ENCODE measurements at regions of chr7 and their contacts with region 1.

Region 1: GRCh38 chr7:19919261-19920095 is 146.1 kb upstream of the TMEM196 start:
- DNase-seq: no peak
- H3K4me3 ChIP-seq: no peak overlapping the region
- H3K27ac ChIP-seq: no peak overlapping the region
- H3K4me1 ChIP-seq: no peaks in the 10 kb centered on the region
- H3K27me3 ChIP-seq: no peaks in the 10 kb centered on the region
- CTCF ChIP-seq: no peak
- POLR2A ChIP-seq: no peak

Region 2: GRCh38 chr7:19969859-19970498 is 50.5 kb after region 1 on chr7:
- intact Hi-C with region 1: loop called (anchors 10 kb)
- DNase-seq: no peak
- H3K4me3 ChIP-seq: no peak overlapping the region
- H3K27ac ChIP-seq: no peak overlapping the region
- H3K4me1 ChIP-seq: no peaks in the 10 kb centered on the region
- H3K27me3 ChIP-seq: no peaks in the 10 kb centered on the region
- CTCF ChIP-seq: no peak
- POLR2A ChIP-seq: no peak

Region 3: GRCh38 chr7:20199015-20199737 is 279.7 kb after region 1 on chr7:
- intact Hi-C with region 1: no loop called
- DNase-seq: peak; percentile 76
- H3K4me3 ChIP-seq: peak overlapping the region in 1 of 8 donors; percentile 16
- H3K27ac ChIP-seq: peak overlapping the region in 7 of 8 donors; percentile 44 to 83 (median 74)
- H3K4me1 ChIP-seq: peaks cover 0 to 42% (median 17%) of the 10 kb centered on the region in 6 donors
- H3K27me3 ChIP-seq: no peaks in the 10 kb centered on the region
- CTCF ChIP-seq: no peak
- POLR2A ChIP-seq: peak in 1 of 3 donors; percentile 24